Right lobe of liver (tissue), 6 donors: ENCODE measurements at regions of chr6 and their contacts with region 1.

Region 1: DNA sequence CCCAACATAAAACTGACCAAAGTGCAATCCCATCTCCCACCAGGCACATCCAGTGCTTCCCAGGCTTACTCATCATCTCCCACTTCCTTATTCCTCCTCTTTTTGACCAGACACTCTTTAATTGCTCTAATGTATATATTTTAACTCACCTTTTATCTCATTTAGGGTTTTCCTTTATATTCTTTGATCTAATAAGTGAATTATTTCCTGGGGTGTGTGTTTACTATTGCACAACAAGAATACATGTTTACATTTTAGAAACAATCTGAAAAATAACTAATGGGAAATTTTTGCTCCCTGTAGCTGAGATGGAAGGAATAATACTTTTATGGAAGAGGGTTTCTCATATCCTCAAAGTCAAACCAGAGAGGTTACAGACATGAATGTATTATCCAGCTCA is 18.4 kb downstream of the RHAG start:
- DNase-seq: no peak
- ATAC-seq: no peak
- H3K4me3 ChIP-seq: no peak overlapping the region
- H3K27ac ChIP-seq: no peak overlapping the region
- H3K4me1 ChIP-seq: no peaks in the 10 kb centered on the region
- H3K27me3 ChIP-seq: no peaks in the 10 kb centered on the region
- CTCF ChIP-seq: no peak
- POLR2A ChIP-seq: no peak

Region 2: DNA sequence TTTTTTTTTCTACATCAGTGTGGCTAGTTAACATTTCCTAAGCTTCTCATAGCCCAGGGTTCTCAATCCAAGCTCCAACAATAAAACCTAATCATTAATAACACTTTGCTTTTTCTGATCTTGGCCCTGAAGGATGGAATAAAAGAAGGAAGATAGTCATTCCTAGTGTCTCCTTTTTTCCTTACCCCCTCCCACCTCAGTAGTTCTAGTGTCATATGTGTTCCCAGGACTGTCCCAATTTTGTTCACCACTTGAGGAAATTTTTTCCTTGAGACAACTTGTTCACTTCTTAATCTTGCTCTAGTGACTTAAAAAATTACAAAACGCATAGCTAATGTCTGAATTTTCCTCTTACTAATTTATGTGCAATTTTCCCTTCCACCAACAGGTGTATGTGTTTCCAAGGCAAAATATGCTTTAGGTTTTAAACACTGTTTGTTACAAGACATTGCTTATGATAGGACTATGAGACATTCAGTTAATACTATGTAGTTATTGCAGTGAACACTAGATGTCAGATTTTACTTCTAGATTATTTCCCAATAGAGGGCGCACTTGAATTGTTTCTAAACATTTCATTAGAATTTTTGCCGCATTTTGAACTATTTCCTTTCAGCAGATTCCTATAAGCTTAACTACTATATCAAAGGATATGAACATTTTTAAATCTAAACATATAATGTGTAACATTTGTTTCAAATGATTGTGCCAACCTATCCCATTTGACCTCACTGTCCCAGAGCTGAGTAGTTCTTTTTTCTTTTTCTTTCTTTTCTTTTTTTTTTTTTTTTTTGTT is 86.3 kb before region 1 on chr6:
- intact Hi-C with region 1: loop called in 1 of 2 experiments (anchors 10 kb)
- DNase-seq: no peak
- ATAC-seq: peak; percentile 91 to 98 (median 95)
- H3K4me3 ChIP-seq: peak overlapping the region; percentile 17 to 41 (median 30)
- H3K27ac ChIP-seq: no peak overlapping the region
- H3K4me1 ChIP-seq: peaks cover 0 to 7% (median under 1%) of the 10 kb centered on the region in 4 donors
- H3K27me3 ChIP-seq: no peaks in the 10 kb centered on the region
- CTCF ChIP-seq: peak; percentile 78 to 92 (median 86)
- POLR2A ChIP-seq: no peak

Region 3: DNA sequence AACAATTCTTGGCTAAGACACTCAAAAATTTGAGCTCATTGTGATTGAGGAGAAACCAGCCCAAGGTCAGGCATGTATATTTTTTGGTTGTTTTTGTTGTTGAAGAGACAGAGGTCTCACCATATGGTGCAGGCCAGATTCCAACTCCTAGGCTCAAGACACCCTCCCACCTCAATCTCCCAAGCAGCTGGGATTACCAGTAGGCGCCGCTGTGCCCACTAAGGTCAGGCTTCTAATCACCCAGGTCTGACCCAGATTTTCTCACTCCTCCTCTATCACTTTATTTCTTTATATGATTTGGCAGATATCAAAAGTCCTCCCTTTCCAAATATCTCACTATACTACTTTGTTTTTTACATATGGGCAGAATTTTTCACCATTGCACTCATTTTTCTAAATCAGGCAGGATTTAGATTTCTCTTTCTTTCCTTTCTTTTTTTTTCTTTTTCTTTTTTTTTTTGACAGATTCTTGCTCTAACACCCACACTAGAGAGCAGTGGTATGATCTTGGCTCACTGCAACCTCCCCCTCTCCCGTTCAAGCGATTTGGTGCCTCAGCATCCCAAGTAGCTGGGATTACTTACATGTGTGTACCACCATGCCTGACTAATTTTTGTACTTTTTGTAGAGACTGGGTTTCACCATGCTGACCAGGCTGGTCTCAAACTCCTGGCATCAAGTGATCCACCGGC is 69.5 kb before region 1 on chr6:
- intact Hi-C with region 1: no loop called
- DNase-seq: no peak
- ATAC-seq: no peak
- H3K4me3 ChIP-seq: no peak overlapping the region
- H3K27ac ChIP-seq: no peak overlapping the region
- H3K4me1 ChIP-seq: peaks cover 0 to 11% (median 3%) of the 10 kb centered on the region in 4 donors
- H3K27me3 ChIP-seq: no peaks in the 10 kb centered on the region
- CTCF ChIP-seq: no peak
- POLR2A ChIP-seq: no peak

Region 4: DNA sequence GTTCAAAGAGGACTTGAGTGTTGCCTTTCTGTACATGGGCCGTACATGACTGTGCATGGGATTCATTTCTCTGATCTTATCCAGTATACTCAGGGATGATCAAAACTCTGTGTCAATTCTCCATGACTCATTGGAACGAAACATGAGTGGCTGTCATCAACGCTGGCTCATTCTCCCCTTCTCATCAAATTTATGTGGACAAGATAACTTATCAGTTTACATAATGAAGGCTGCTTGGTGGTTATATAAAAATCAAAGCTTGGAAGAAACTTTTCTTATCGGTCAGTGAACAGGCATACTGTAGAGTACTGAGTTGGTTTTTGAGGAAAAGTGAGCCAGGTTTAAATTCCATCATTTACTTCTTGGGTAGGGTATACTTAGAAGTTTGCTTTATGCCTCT is 223.2 kb after region 1 on chr6:
- intact Hi-C with region 1: loop called (anchors 5 to 10 kb)
- DNase-seq: no peak
- ATAC-seq: no peak
- H3K4me3 ChIP-seq: no peak overlapping the region
- H3K27ac ChIP-seq: no peak overlapping the region
- H3K4me1 ChIP-seq: no peaks in the 10 kb centered on the region
- H3K27me3 ChIP-seq: no peaks in the 10 kb centered on the region
- CTCF ChIP-seq: no peak
- POLR2A ChIP-seq: no peak